SK-N-SH (cell line): ENCODE measurements at regions of chr17 and their contacts with region 1.

Region 1: DNA sequence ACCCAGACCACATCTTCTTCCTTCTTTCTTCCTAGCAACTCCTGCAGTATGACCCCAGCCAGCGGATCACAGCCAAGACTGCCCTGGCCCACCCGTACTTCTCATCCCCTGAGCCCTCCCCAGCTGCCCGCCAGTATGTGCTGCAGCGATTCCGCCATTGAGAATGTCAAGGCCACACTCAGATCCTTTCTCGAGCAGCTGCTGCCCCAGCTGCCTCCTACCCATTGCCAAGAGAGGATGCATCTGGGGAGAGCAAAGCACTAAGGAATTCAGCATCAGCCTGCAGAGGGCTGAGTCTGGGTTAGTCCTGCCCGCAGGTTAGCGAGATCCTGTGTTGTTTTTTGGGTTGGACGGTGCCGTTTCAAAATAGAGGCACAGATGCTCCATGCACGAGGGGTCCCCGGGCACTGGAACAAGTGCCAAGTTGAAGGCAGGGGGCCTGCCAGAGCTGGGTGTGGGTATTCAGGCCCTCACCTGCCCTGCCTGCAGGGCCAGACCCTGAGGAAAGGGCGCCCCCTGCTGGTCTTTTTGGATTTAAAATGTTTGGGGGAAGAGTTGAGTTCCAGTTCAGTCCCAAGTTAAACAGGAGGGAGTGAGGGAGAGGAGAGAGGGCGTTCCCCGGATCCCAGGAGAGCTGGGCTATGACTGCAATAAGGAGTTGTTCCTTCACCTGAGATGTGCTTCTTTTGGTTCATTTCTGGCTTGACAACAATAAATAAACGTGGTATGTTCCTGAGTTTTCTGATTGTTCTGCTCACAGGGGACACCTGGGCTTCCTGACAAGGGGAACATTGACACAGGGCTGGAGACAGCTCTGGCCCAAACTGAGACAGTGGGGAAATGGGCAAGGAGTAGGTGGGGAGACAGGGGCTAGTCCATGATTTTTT is 4.9 kb downstream of the CDK3 start:
- DNase-seq: peak; percentile 92
- H3K4me3 ChIP-seq: no peak overlapping the region; a peak in 1 of 4 replicates
- H3K27ac ChIP-seq: peak overlapping the region in 1 of 2 experiments; percentile 38; a peak in 1 of 4 replicates
- H3K4me1 ChIP-seq: peaks cover 0 to 10% of the 10 kb centered on the region in 2 experiments; a peak in 2 of 4 replicates
- H3K27me3 ChIP-seq: no peaks in the 10 kb centered on the region
- CTCF ChIP-seq: peak; percentile 94
- EP300 ChIP-seq: no peak
- RAD21 ChIP-seq: peak; percentile 83

Region 2: GRCh38 chr17:75834944-75835670 is 170.4 kb before region 1 on chr17:
- CTCF ChIA-PET with region 1: no interaction called
- POLR2A ChIA-PET with region 1: no interaction called
- DNase-seq: peak; percentile 84
- H3K4me3 ChIP-seq: no peak overlapping the region
- H3K27ac ChIP-seq: no peak overlapping the region
- H3K4me1 ChIP-seq: peaks cover 0 to 4% of the 10 kb centered on the region in 2 experiments; a peak in 1 of 4 replicates
- H3K27me3 ChIP-seq: no peaks in the 10 kb centered on the region
- CTCF ChIP-seq: no peak
- EP300 ChIP-seq: no peak
- RAD21 ChIP-seq: no peak

Region 3: DNA sequence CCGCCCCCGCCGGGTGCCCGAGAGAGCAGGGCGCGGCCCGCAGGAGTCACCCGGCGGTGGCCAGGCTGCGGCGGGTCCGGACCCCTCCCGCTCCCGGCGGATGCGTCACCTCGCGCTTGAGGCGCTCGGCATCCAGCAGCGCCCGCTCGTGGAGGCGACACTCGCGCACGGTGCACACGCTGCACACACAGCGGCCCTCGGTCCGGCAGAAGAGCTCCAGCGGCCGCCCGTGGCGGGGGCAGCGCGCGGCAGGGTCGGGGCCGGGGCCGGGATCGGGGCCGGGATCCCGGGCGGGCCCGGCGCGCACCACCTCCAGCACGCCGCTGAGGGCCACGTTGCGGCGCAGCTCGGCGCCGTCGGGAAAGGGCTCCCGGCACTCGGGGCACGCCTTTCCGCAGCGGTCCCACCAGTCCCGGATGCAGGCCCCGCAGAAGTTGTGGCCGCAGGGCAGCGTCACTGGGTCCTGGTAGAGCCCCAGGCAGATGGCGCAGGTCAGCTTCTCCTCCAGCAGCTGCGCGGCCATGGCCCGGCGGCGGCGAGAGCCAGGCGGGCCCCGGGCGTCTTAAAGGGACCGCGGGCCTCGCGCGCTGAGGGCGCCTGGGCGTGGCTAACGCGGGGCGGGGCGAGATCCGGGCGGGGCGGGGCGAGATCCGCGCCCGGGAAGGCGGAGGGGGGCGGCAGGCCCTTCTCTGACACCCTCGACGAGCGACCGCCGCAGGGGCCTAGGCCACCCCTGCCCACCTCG is 108.9 kb before region 1 on chr17 and contains the start of gene TRIM65:
- CTCF ChIA-PET with region 1: interaction called, 14 read pairs
- POLR2A ChIA-PET with region 1: no interaction called
- DNase-seq: peak; percentile 98
- H3K4me3 ChIP-seq: peak within 1 kb of the TSS; percentile 73 to 76
- H3K27ac ChIP-seq: peak within 1 kb of the TSS; percentile 69 to 91
- H3K4me1 ChIP-seq: peaks cover 9 to 13% of the 10 kb centered on the region in 2 experiments; a peak in 3 of 4 replicates
- H3K27me3 ChIP-seq: no peaks in the 10 kb centered on the region
- CTCF ChIP-seq: peak; percentile 43
- EP300 ChIP-seq: no peak
- RAD21 ChIP-seq: peak; percentile 32
- polyA plus RNA-seq, gene TRIM65: 13.1 and 18.1 TPM in 2 replicates

Region 4: GRCh38 chr17:75927286-75927922 is 78.1 kb before region 1 on chr17:
- CTCF ChIA-PET with region 1: interaction called, 23 read pairs
- POLR2A ChIA-PET with region 1: interaction called, 3 read pairs
- DNase-seq: peak; percentile 75
- H3K4me3 ChIP-seq: no peak overlapping the region
- H3K27ac ChIP-seq: no peak overlapping the region
- H3K4me1 ChIP-seq: no peaks in the 10 kb centered on the region
- H3K27me3 ChIP-seq: no peaks in the 10 kb centered on the region
- CTCF ChIP-seq: peak; percentile 46
- EP300 ChIP-seq: no peak
- RAD21 ChIP-seq: peak; percentile 29; the same call in 1 of the 2 replicates

Region 5: DNA sequence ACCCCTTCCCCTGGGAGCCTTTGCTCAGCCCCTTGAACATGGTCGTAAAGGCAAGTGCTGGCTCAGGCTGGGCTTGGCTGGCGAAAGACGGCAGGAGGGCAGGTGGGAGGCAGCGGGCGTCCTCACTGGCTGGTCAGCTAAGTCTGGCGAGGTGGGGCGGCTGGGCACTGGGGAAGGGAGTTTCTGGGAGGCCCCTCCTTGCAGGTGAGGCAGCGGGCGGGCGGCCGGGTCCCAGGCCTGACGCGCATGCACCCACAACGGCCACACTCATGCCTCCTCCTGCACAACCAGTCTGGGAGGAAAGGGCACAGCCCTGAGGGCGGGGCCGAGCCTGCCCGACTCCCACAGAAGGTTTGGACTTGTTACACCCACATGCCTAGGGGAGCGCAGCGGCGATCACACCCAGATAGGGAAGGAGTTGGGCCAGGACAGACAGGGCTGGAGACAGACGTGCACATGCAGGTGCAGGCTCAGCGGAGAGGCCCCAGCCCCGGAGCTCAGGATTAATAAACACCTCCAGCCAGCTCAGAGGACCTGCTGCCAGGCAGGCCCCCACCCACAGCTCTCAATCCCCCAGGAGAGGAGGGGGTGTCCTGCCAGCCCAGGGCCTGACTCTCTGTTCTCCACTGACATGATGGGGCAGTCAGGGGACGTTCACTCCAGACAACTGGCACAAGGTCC is 21.8 kb after region 1 on chr17 and contains the start of gene EVPL:
- CTCF ChIA-PET with region 1: interaction called, 18 read pairs
- POLR2A ChIA-PET with region 1: no interaction called
- DNase-seq: no peak
- H3K4me3 ChIP-seq: no peak within 1 kb of the TSS
- H3K27ac ChIP-seq: no peak within 1 kb of the TSS
- H3K4me1 ChIP-seq: peaks cover 9 to 13% of the 10 kb centered on the region in 2 experiments; a peak in 3 of 4 replicates
- H3K27me3 ChIP-seq: no peaks in the 10 kb centered on the region
- CTCF ChIP-seq: no peak
- EP300 ChIP-seq: no peak
- RAD21 ChIP-seq: no peak
- polyA plus RNA-seq, gene EVPL: 0.15 and 0.23 TPM in 2 replicates

Region 6: GRCh38 chr17:76072148-76072858 is 66.8 kb after region 1 on chr17 and contains the start of gene SRP68:
- CTCF ChIA-PET with region 1: interaction called, 10 read pairs
- POLR2A ChIA-PET with region 1: no interaction called
- DNase-seq: peak; percentile 100
- H3K4me3 ChIP-seq: peak within 1 kb of the TSS; percentile 78 to 82
- H3K27ac ChIP-seq: peak within 1 kb of the TSS; percentile 41 to 63; a peak in 3 of 4 replicates
- H3K4me1 ChIP-seq: peaks cover 0 to 17% of the 10 kb centered on the region in 2 experiments; a peak in 3 of 4 replicates
- H3K27me3 ChIP-seq: peaks cover 39% of the 10 kb centered on the region
- CTCF ChIP-seq: no peak
- EP300 ChIP-seq: peak in 1 of 2 experiments; percentile 72; a peak in 1 of 4 replicates
- RAD21 ChIP-seq: 0 out of 2 replicates have a peak, but pooled peaks have one; percentile 8
- polyA plus RNA-seq, gene SRP68: 76.8 and 81.4 TPM in 2 replicates

Region 7: GRCh38 chr17:76204277-76204676 is 198.8 kb after region 1 on chr17:
- CTCF ChIA-PET with region 1: no interaction called
- POLR2A ChIA-PET with region 1: no interaction called
- DNase-seq: no peak
- H3K4me3 ChIP-seq: peak overlapping the region in 1 of 2 experiments; percentile 4; a peak in 1 of 4 replicates
- H3K27ac ChIP-seq: peak overlapping the region in 1 of 2 experiments; percentile 64; a peak in 2 of 4 replicates
- H3K4me1 ChIP-seq: peaks cover 6 to 11% of the 10 kb centered on the region in 2 experiments; a peak in 3 of 4 replicates
- H3K27me3 ChIP-seq: no peaks in the 10 kb centered on the region
- CTCF ChIP-seq: no peak
- EP300 ChIP-seq: no peak
- RAD21 ChIP-seq: no peak

Region 8: DNA sequence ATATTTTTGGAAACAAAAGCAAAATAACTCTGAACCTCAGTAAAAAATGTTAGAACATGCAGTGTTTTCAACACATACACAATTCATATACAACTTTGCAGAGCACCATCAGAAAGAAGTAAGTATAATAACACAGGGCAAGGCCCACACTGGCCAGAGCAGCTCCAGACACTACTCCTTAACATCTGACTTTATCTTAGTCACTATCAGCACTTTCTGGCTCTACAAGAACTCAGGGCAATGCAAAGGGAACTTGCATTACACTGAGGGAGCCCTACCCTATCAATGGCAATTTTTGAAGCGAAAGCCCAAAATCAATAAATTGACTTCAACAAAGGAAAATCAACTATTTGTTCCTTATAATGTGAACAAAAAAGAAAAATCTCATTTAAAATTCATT is 218.3 kb after region 1 on chr17:
- CTCF ChIA-PET with region 1: no interaction called
- POLR2A ChIA-PET with region 1: no interaction called
- DNase-seq: no peak
- H3K4me3 ChIP-seq: no peak overlapping the region
- H3K27ac ChIP-seq: no peak overlapping the region
- H3K4me1 ChIP-seq: no peaks in the 10 kb centered on the region
- H3K27me3 ChIP-seq: no peaks in the 10 kb centered on the region
- CTCF ChIP-seq: no peak
- EP300 ChIP-seq: no peak
- RAD21 ChIP-seq: no peak

Region 9: GRCh38 chr17:76318586-76318985 is 313.1 kb after region 1 on chr17:
- CTCF ChIA-PET with region 1: no interaction called
- POLR2A ChIA-PET with region 1: no interaction called
- DNase-seq: no peak
- H3K4me3 ChIP-seq: no peak overlapping the region
- H3K27ac ChIP-seq: no peak overlapping the region
- H3K4me1 ChIP-seq: peaks cover 0 to 7% of the 10 kb centered on the region in 2 experiments; a peak in 1 of 4 replicates
- H3K27me3 ChIP-seq: no peaks in the 10 kb centered on the region
- CTCF ChIP-seq: no peak
- EP300 ChIP-seq: no peak
- RAD21 ChIP-seq: no peak